IMR-90 (cell line): ENCODE measurements at regions of chr5 and their contacts with region 1.

Region 1: DNA sequence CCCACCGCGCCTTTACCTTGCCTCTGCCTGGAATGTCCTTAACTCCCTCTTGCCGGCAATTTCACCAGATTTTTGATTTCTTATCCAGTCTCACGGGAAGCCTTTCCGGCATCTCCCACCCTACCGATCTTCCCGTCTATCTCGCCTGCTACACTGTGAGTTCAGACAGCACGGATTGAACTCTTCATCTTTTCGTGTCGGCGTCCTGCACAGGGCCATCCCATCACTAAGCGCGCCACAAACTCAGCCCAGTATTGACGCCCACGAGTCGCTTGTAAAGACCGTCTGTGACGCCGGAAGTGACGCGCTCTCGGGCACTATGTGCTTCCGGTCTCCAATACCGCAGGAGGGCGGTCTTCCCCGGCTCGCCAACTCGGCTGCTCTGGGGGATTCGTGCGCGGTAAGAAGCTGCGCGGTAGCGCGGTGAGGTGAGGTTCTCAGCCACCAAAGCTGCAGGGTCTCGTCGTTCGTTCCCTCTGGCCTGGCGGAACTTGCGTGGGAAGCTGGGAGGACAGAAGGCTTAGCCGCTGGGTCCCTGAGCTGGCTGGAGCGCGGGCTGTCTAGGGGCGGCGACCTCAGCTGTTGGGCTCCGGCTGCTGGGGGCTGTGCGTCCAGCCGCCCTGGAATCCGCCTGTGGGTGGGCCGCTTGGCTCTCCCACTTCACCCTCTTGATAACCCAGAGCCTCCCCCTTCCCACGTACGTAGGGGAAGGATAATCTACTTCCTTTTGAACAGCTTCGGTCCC is at the start of gene ZCCHC9:
- DNase-seq: peak; percentile 96
- ATAC-seq: peak; percentile 87
- H3K4me3 ChIP-seq: peak within 1 kb of the TSS; percentile 61
- H3K27ac ChIP-seq: peak within 1 kb of the TSS; percentile 91
- H3K4me1 ChIP-seq: peaks cover 4% of the 10 kb centered on the region
- H3K27me3 ChIP-seq: no peaks in the 10 kb centered on the region
- CTCF ChIP-seq: peak; percentile 35
- POLR2A ChIP-seq: peak; percentile 94
- RAD21 ChIP-seq: no peak
- total RNA-seq, gene ZCCHC9: 24.6 and 41.1 TPM in 2 replicates

Region 2: GRCh38 chr5:80686757-80687156 is 614.7 kb before region 1 on chr5:
- CTCF ChIA-PET with region 1: no interaction called
- POLR2A ChIA-PET with region 1: no interaction called
- dilution Hi-C with region 1: no loop called
- in situ Hi-C with region 1: loop called (anchors 10 kb)
- intact Hi-C with region 1: loop called (anchors 2 kb)
- DNase-seq: peak; percentile 36
- ATAC-seq: peak; percentile 44; the same call in 1 of the 2 replicates
- H3K4me3 ChIP-seq: no peak overlapping the region
- H3K27ac ChIP-seq: no peak overlapping the region
- H3K4me1 ChIP-seq: peaks cover 2% of the 10 kb centered on the region; the same call in 1 of the 2 replicates
- H3K27me3 ChIP-seq: no peaks in the 10 kb centered on the region
- CTCF ChIP-seq: peak; percentile 58
- POLR2A ChIP-seq: no peak
- RAD21 ChIP-seq: peak; percentile 60

Region 3: DNA sequence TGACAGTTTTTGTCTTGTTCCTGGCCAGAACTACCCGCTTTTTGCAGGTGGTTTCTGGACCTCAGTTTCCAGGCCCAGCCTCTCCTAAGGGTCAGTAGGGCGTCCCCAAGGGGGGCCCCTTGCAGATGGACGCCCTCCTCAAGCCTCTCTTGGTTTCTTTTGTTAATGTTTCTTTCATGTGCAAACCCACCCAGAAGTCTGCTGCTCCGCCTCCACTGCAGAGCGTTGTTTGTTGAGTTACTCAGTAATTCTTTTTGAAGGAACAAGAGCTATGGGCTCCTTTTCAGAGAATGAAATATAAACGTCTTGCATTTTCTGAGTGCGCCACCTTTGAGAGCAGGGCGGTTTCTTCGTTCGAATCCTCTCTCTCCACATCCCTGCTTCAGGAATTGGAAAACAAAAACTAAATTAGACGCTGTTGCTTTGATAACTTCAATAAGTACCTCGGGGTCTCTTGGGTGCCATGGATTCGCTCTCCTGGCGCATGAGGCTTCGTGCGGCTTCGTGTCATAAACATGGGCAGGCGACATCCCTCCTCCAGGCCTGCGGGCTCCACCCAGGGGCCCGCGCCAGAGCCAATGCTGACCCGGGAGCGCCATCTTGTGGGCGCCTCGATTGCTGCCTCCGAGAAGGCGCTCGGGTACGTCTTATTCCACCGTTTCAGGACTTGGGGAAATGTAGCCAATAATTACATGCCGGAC is 106.7 kb before region 1 on chr5:
- CTCF ChIA-PET with region 1: no interaction called
- POLR2A ChIA-PET with region 1: no interaction called
- dilution Hi-C with region 1: no loop called
- in situ Hi-C with region 1: no loop called
- intact Hi-C with region 1: loop called (anchors 5 kb)
- DNase-seq: peak; percentile 70
- ATAC-seq: peak; percentile 100
- H3K4me3 ChIP-seq: no peak overlapping the region
- H3K27ac ChIP-seq: no peak overlapping the region
- H3K4me1 ChIP-seq: no peaks in the 10 kb centered on the region; the same call in 1 of the 2 replicates
- H3K27me3 ChIP-seq: no peaks in the 10 kb centered on the region
- CTCF ChIP-seq: peak; percentile 95
- POLR2A ChIP-seq: no peak
- RAD21 ChIP-seq: peak; percentile 94

Region 4: DNA sequence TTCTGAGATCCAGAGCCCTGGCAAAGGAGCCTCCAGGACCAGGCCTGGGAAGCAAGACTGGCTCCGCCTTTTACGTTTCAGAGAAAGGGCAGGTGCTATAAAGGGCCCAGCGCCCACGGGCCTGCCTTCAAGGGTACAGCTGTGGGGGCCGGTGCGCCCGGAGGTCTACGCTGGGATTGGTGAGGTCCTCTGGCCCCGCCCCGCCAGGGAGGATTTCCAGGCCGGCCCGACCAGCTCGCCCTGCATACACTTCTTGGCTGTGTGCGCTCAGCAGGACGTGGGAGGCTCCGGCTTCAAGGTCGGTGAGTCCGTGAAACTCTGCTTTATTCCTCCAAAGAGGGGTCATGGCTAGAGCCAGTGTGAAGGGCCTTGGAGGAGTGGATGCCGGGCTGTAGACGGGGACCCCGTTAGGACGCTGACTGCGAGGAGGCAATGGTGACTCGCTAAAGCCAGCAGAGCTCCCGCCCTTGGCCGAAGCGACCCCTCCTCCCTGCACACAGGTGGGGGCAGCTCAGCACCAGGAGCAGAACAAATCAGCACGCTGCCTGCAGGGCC is 68.3 kb before region 1 on chr5 and contains the start of gene CKMT2:
- CTCF ChIA-PET with region 1: no interaction called
- POLR2A ChIA-PET with region 1: no interaction called
- dilution Hi-C with region 1: no loop called
- in situ Hi-C with region 1: no loop called
- intact Hi-C with region 1: no loop called
- DNase-seq: no peak
- ATAC-seq: peak; percentile 89
- H3K4me3 ChIP-seq: no peak within 1 kb of the TSS
- H3K27ac ChIP-seq: no peak within 1 kb of the TSS
- H3K4me1 ChIP-seq: peaks cover 2% of the 10 kb centered on the region; the same call in 1 of the 2 replicates
- H3K27me3 ChIP-seq: no peaks in the 10 kb centered on the region
- CTCF ChIP-seq: no peak
- POLR2A ChIP-seq: no peak
- RAD21 ChIP-seq: no peak
- total RNA-seq, gene CKMT2: 0.28 and 0.36 TPM in 2 replicates

Region 5: GRCh38 chr5:81286059-81286617 is 15.3 kb before region 1 on chr5:
- CTCF ChIA-PET with region 1: no interaction called
- POLR2A ChIA-PET with region 1: no interaction called
- dilution Hi-C with region 1: no loop called
- in situ Hi-C with region 1: no loop called
- intact Hi-C with region 1: no loop called
- DNase-seq: no peak
- ATAC-seq: no peak
- H3K4me3 ChIP-seq: no peak overlapping the region
- H3K27ac ChIP-seq: no peak overlapping the region
- H3K4me1 ChIP-seq: no peaks in the 10 kb centered on the region; the same call in 1 of the 2 replicates
- H3K27me3 ChIP-seq: no peaks in the 10 kb centered on the region
- CTCF ChIP-seq: no peak
- POLR2A ChIP-seq: no peak
- RAD21 ChIP-seq: no peak

Region 6: DNA sequence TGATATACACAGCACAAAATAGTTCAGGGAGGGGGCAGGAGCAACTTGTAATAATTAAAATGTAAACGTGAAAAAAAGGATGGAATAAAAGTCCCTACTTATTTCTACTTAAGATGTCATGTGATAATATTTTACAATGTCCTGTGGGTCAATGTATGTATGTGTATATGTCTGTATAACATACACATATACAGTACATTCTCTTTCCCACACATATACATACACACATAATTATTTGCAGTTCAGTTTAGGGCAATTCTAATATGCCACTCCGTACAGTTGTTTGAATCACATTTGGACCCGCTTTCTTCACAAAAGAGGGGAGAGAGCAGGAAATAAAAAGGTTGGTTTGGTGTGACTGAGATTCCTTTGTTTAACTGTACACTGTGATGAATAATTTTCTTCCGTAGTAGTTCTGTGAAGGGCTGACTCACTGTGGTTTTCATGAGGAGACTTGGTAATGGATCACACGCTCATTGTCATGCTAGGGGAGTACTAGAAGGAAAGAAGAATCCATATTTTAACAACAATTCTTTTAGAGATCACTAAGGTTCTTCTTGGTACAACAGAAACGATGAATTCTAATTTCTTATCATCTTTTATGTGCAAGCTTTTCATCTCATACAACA is 118.7 kb after region 1 on chr5:
- CTCF ChIA-PET with region 1: no interaction called
- POLR2A ChIA-PET with region 1: no interaction called
- dilution Hi-C with region 1: no loop called
- in situ Hi-C with region 1: no loop called
- intact Hi-C with region 1: loop called (anchors 1 kb)
- DNase-seq: peak; percentile 96
- ATAC-seq: peak; percentile 67
- H3K4me3 ChIP-seq: no peak overlapping the region
- H3K27ac ChIP-seq: no peak overlapping the region; the same call in 1 of the 2 replicates
- H3K4me1 ChIP-seq: peaks cover 14% of the 10 kb centered on the region
- H3K27me3 ChIP-seq: no peaks in the 10 kb centered on the region
- CTCF ChIP-seq: no peak
- POLR2A ChIP-seq: peak; percentile 33
- RAD21 ChIP-seq: no peak

Region 7: GRCh38 chr5:81719743-81720345 is 418.4 kb after region 1 on chr5:
- CTCF ChIA-PET with region 1: no interaction called
- POLR2A ChIA-PET with region 1: no interaction called
- dilution Hi-C with region 1: no loop called
- in situ Hi-C with region 1: no loop called
- intact Hi-C with region 1: no loop called
- DNase-seq: peak; percentile 13
- ATAC-seq: no peak
- H3K4me3 ChIP-seq: no peak overlapping the region
- H3K27ac ChIP-seq: no peak overlapping the region
- H3K4me1 ChIP-seq: peaks cover 9% of the 10 kb centered on the region
- H3K27me3 ChIP-seq: no peaks in the 10 kb centered on the region
- CTCF ChIP-seq: no peak
- POLR2A ChIP-seq: no peak
- RAD21 ChIP-seq: no peak

Region 8: DNA sequence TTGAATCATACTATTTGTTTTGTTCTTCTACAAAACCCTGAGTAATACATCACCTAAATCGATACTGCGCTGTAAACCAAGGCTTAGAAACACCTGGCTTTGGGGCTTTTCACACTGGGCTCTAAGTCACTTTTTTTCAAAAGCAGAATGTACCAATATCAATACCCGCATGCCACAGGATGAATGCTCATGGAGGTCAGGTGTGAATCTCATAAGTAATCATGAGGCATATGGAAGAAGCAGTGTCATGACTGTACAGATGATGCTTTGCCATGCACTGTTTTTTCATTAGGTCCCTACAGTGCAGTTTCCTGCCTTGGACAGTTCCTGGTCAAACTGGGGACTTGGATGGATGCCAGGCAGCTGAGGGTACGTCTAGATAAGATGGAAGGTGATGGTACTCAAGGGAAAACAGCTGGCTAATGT is 621.4 kb after region 1 on chr5:
- CTCF ChIA-PET with region 1: no interaction called
- POLR2A ChIA-PET with region 1: no interaction called
- dilution Hi-C with region 1: no loop called
- in situ Hi-C with region 1: no loop called
- intact Hi-C with region 1: no loop called
- DNase-seq: no peak
- ATAC-seq: no peak
- H3K4me3 ChIP-seq: no peak overlapping the region
- H3K27ac ChIP-seq: no peak overlapping the region
- H3K4me1 ChIP-seq: no peaks in the 10 kb centered on the region
- H3K27me3 ChIP-seq: peaks cover 10% of the 10 kb centered on the region
- CTCF ChIP-seq: no peak
- POLR2A ChIP-seq: no peak
- RAD21 ChIP-seq: no peak